Activated CD8-positive, alpha-beta T cell treated with anti-CD3 and anti-CD28 coated beads, Interleukin-2, amount 10 ng/mL, durations not matched to agents 7 days and 5 days (primary cell): ENCODE measurements at regions of chr18 and their contacts with region 1.

Region 1: GRCh38 chr18:48813833-48814489 is 136.8 kb downstream of the SMAD7 start:
- DNase-seq: peak; percentile 48
- ATAC-seq: peak; percentile 72
- H3K4me3 Mint-ChIP-seq: no peak overlapping the region
- H3K27ac Mint-ChIP-seq: peak overlapping the region; percentile 89
- H3K4me1 Mint-ChIP-seq: peaks cover 49% of the 10 kb centered on the region
- H3K27me3 Mint-ChIP-seq: no peaks in the 10 kb centered on the region

Region 2: DNA sequence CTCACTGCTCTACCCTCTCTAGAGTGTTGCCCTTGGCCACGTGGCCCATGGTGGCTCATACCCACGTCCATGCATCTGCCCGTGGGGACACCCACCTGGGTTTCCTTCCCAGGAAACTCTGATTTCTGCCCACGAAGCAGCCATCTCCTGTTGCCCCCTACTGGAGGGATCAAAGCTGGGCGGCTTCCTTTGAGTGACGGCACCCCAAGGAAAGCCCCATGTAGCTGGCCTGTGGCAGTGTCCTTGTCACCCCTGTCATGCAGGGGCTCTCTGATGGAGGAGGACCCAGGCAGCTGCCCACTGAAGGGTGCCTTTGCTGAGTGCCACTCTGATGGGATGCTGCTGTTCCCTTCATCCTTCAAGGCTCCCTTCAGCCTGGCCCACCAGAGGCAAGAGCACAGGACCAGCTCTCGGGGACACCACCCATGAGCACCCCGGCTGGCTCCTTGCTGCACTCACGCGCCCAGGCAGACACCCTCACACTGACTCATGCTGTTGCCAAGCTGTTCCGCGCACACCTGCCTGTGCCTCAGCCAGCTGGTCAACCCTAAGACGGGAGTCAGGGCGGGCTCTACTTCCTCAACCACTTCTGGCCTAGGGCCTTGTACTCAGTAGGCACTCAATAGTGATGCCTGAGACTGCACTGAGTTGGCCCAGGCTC is 174.1 kb before region 1 on chr18:
- CTCF ChIA-PET with region 1: no interaction called
- POLR2A ChIA-PET with region 1: no interaction called
- DNase-seq: no peak
- ATAC-seq: no peak
- H3K4me3 Mint-ChIP-seq: no peak overlapping the region
- H3K27ac Mint-ChIP-seq: no peak overlapping the region
- H3K4me1 Mint-ChIP-seq: no peaks in the 10 kb centered on the region
- H3K27me3 Mint-ChIP-seq: peaks cover 4% of the 10 kb centered on the region

Region 3: DNA sequence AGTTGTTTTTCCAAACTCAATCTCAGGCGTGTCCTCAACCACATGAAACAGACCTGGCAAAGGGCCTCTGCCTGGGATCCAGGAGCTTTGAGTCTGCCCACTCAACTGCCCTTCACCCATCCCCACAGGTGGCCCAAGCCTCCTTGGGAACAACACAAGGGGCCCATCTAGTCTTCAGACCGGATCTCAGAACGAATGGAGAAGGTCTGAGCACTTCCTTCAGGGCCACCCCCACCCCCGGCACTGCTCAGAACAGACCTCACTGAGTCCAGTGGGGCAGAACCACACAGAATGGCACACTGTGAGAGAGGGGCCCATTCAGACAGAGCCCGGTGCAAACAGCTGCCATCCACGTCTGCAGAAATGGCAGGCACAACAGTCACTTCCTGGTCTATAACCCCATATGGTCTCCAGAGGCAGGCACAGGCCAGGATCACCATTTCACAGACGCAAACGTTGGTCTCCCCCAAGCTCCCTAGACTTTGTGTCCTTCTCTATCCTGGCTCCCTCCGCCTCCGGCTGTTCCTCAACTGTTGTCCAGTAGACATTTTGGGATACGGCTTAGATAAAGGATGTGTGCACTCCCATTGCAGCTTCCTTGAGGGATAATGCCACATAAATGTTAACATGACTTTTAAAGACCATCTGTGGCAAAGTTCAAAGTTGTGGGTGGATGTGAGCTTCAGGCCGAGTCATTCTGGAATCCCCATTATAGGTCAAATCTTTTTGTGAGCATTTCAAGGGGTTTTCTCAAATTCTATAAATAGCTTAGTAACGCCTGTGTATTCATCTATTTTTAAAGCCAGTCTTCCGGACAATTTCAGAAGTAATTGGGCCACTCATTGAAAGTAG is 12.9 kb before region 1 on chr18:
- CTCF ChIA-PET with region 1: interaction called, 10 read pairs
- POLR2A ChIA-PET with region 1: interaction called, 5 read pairs
- DNase-seq: no peak
- ATAC-seq: no peak
- H3K4me3 Mint-ChIP-seq: no peak overlapping the region
- H3K27ac Mint-ChIP-seq: no peak overlapping the region
- H3K4me1 Mint-ChIP-seq: peaks cover 51% of the 10 kb centered on the region
- H3K27me3 Mint-ChIP-seq: no peaks in the 10 kb centered on the region

Region 4: DNA sequence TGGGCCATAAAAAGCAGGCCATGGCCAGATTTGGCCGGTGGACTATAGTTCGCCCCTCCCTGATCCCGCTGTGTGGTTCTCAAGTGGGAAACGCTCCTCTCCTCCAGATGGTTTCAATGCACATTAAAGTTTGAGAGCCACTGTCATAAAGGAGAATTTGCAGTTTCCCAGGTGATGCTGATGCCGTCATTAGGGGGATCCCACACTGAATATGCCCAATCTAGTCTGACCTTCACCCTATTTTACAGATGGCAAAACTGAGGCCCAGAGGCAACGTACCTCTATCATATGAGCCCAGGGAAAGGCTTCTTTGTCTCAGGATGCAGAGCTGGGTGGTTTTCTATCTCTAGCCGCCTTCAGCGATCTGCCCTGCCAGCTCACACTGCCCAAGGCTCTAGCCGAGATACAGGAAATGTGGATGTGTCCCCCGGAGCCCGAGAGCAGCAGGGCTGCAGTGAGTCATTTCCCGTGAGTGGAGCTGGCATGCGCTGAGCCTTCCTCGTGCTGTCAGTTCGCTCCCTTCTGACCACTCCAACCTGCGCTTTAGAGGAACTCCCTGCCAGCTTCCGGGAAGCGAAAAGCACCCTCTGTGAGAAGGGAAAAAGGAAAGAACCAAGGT is 20.6 kb after region 1 on chr18:
- CTCF ChIA-PET with region 1: no interaction called
- POLR2A ChIA-PET with region 1: interaction called, 10 read pairs
- DNase-seq: peak; percentile 85
- ATAC-seq: peak; percentile 88
- H3K4me3 Mint-ChIP-seq: peak overlapping the region; percentile 74
- H3K27ac Mint-ChIP-seq: peak overlapping the region; percentile 91
- H3K4me1 Mint-ChIP-seq: peaks cover 94% of the 10 kb centered on the region
- H3K27me3 Mint-ChIP-seq: no peaks in the 10 kb centered on the region